HCT116 (cell line): ENCODE measurements at regions of chr18 and their contacts with region 1.

Region 1: GRCh38 chr18:50674307-50674706 is 114.4 kb downstream of the MAPK4 start:
- DNase-seq: no peak
- ATAC-seq: no peak
- H3K4me3 ChIP-seq: no peak overlapping the region
- H3K27ac ChIP-seq: no peak overlapping the region
- H3K4me1 ChIP-seq: peaks cover 0 to 5% of the 10 kb centered on the region in 2 experiments; a peak in 1 of 4 replicates
- H3K27me3 ChIP-seq: no peaks in the 10 kb centered on the region
- CTCF ChIP-seq: no peak
- POLR2A ChIP-seq: no peak
- RAD21 ChIP-seq: no peak

Region 2: DNA sequence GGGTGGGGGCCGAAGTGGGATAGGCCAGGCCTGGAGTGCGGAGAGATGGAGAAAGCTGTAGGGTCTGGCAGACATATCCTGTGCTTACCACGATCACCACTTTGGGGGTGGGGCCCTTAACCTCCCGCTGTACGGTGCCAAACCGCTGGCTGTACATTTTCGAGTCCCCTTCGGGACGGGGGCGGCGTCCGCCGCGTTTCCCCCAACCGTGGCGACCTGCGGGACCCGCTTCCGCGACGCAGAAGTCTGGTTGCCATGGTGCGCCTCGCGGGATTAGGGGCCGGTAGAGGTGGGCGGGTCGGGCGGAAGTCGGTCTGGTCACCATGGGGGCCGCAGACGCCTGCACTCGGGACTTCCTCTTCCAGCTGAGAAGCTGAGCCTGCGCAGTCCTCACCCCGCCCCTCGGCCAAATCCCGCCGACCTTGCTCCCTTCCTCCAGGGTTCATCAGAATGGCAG is 408.0 kb before region 1 on chr18 and contains the start of gene CFAP53:
- CTCF ChIA-PET with region 1: no interaction called
- POLR2A ChIA-PET with region 1: no interaction called
- RAD21 ChIA-PET with region 1: no interaction called
- intact Hi-C with region 1: no loop called
- DNase-seq: no peak
- ATAC-seq: no peak
- H3K4me3 ChIP-seq: no peak within 1 kb of the TSS
- H3K27ac ChIP-seq: no peak within 1 kb of the TSS
- H3K4me1 ChIP-seq: no peaks in the 10 kb centered on the region
- H3K27me3 ChIP-seq: no peaks in the 10 kb centered on the region
- CTCF ChIP-seq: no peak
- POLR2A ChIP-seq: no peak
- RAD21 ChIP-seq: no peak
- total RNA-seq, gene CFAP53: 1.1 TPM

Region 3: DNA sequence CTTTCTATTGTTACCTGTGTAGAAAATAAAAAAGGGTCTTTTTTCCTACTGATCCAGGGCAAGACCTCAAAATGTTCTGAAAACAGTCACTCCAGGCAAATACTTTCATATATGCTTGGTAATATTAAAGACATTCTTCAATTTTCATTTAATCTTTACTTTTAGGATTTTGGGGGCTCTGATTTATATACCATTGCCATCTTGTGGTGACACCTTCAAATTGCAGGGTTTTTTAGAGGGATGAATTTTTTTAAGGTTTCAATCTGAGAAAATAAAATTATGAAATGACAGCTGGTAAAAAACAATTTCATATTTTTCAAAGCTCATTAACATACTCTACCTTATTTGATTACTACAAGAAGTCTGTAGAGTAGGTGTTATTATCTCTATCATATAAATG is 87.6 kb before region 1 on chr18:
- CTCF ChIA-PET with region 1: no interaction called
- POLR2A ChIA-PET with region 1: no interaction called
- RAD21 ChIA-PET with region 1: no interaction called
- intact Hi-C with region 1: loop called (anchors 10 kb)
- DNase-seq: no peak
- ATAC-seq: no peak
- H3K4me3 ChIP-seq: no peak overlapping the region
- H3K27ac ChIP-seq: no peak overlapping the region
- H3K4me1 ChIP-seq: no peaks in the 10 kb centered on the region
- H3K27me3 ChIP-seq: peaks cover 16% of the 10 kb centered on the region; the same call in 1 of the 2 replicates
- CTCF ChIP-seq: peak; percentile 25 to 61 (median 33); a peak in 4 of 6 replicates
- POLR2A ChIP-seq: no peak
- RAD21 ChIP-seq: peak; percentile 56; the same call in 1 of the 2 replicates